IMR-90 (cell line): ENCODE measurements at regions of chr10 and their contacts with region 1.

Region 1: GRCh38 chr10:132452631-132453469 is 55.9 kb downstream of the PWWP2B start:
- DNase-seq: peak; percentile 72
- ATAC-seq: peak; percentile 97
- H3K4me3 ChIP-seq: peak overlapping the region; percentile 15; the same call in 1 of the 2 replicates
- H3K27ac ChIP-seq: no peak overlapping the region
- H3K4me1 ChIP-seq: peaks cover 6% of the 10 kb centered on the region
- H3K27me3 ChIP-seq: peaks cover 9% of the 10 kb centered on the region; the same call in 1 of the 2 replicates
- CTCF ChIP-seq: peak; percentile 95
- POLR2A ChIP-seq: no peak
- RAD21 ChIP-seq: peak; percentile 89

Region 2: DNA sequence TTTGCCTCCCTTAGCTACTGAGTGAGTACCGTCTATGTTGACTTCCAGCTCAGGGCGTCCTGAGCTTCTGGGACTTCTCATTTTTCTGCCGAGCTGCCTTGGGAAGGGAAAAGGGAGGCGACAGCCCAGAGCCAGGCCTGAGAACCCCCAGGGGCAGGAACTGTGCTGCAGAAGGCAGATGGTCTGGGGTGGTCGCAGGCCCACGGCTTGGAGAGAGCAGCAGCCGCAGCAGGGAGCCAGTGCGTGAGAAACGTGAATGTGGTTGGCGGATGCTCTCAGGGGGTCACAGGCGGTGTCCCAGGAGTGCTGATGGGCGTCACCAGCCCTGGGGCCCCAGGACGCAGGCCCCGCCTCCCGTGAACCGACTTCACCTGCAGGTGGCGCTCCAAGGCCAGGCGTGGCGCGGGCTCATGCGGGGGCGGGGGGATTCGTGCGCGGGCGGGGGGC is 65.1 kb before region 1 on chr10:
- CTCF ChIA-PET with region 1: no interaction called
- POLR2A ChIA-PET with region 1: no interaction called
- dilution Hi-C with region 1: no loop called
- in situ Hi-C with region 1: loop called (anchors 5 kb)
- intact Hi-C with region 1: loop called (anchors 1 kb)
- DNase-seq: peak; percentile 36
- ATAC-seq: peak; percentile 78
- H3K4me3 ChIP-seq: no peak overlapping the region
- H3K27ac ChIP-seq: no peak overlapping the region
- H3K4me1 ChIP-seq: peaks cover 2% of the 10 kb centered on the region; the same call in 1 of the 2 replicates
- H3K27me3 ChIP-seq: peaks cover 5% of the 10 kb centered on the region; the same call in 1 of the 2 replicates
- CTCF ChIP-seq: peak; percentile 69
- POLR2A ChIP-seq: no peak
- RAD21 ChIP-seq: peak; percentile 65